Tibial artery (tissue), 4 donors: ENCODE measurements at regions of chr15 and their contacts with region 1.

Region 1: DNA sequence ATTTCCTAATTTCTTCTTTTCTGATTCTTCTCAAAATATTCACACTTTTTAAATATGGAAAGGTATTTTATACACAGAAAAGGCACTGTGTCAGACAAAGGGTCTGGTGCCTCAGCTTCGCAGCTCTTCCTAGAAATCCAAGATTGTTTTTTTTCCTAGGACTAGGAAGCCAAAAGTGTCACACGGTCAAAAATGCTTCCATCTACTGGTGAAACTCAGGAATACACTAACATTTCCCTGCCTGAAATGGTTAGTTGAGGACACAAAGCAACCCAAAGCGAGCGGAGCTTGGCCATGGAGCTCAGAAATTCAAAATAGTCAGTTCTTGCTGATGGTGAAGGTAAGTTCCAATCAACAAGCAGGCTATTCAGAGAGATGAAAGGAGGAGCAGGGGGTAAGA is 426.5 kb upstream of the RASGRP1 start:
- DNase-seq: peak in 1 of 2 donors; percentile 21
- H3K4me3 ChIP-seq: no peak overlapping the region
- H3K27ac ChIP-seq: no peak overlapping the region
- H3K4me1 ChIP-seq: peaks cover 0 to 32% (median 3%) of the 10 kb centered on the region in 4 donors
- H3K27me3 ChIP-seq: no peaks in the 10 kb centered on the region
- CTCF ChIP-seq: peak; percentile 34 to 52

Region 2: GRCh38 chr15:38817427-38818156 is 173.5 kb before region 1 on chr15:
- intact Hi-C with region 1: loop called (anchors 5 kb)
- DNase-seq: peak; percentile 85 to 88
- H3K4me3 ChIP-seq: no peak overlapping the region
- H3K27ac ChIP-seq: no peak overlapping the region
- H3K4me1 ChIP-seq: peaks cover 0 to 6% (median 5%) of the 10 kb centered on the region in 4 donors
- H3K27me3 ChIP-seq: no peaks in the 10 kb centered on the region
- CTCF ChIP-seq: peak; percentile 99

Region 3: GRCh38 chr15:39095218-39095879 is 104.2 kb after region 1 on chr15:
- intact Hi-C with region 1: no loop called
- DNase-seq: no peak
- H3K4me3 ChIP-seq: no peak overlapping the region
- H3K27ac ChIP-seq: no peak overlapping the region
- H3K4me1 ChIP-seq: no peaks in the 10 kb centered on the region
- H3K27me3 ChIP-seq: no peaks in the 10 kb centered on the region
- CTCF ChIP-seq: no peak